Right ventricle myocardium inferior (tissue), 1 donor: ENCODE measurements at regions of chr11 and their contacts with region 1.

Region 1: DNA sequence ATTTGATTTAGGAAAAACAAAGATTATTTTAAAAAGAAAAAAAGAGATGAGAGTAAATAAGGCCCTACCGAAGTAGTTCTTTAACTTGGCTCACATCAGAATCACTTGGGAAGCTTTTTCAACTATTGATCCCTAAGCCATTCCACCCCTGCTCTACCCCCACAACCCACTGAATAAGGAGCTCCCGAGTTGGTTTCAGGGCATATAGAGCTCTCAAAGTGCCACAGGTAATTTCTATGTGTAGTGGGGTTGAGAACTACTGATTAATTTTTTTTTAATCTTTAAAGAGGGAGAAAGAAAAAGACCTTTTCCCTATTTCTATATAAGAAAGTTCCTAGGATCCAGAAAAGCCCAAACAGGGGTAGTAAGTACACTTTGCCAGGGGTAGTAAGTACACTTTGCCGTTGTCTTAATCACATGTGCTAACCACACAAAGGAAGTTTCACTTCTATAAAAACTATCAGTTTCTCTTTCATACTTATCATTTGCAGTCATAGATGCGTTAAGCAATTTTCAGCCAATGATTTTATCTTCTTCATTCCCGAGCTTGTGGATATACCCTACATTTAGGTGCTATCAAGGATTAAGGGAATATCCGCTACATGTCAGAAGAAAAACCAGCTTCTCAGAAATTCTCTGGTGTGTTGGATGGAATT is 108.4 kb upstream of the ZC3H12C start:
- DNase-seq: no peak
- ATAC-seq: no peak

Region 2: GRCh38 chr11:110026858-110027626 is 42.3 kb after region 1 on chr11:
- intact Hi-C with region 1: no loop called
- DNase-seq: no peak
- ATAC-seq: peak; percentile 48

Region 3: GRCh38 chr11:110056956-110057355 is 72.2 kb after region 1 on chr11:
- intact Hi-C with region 1: loop called (anchors 2 kb)
- DNase-seq: no peak
- ATAC-seq: no peak